H1 (cell line): ENCODE measurements at regions of chrX and their contacts with region 1.

Region 1: GRCh38 chrX:66728818-66729271 is 90.0 kb upstream of the EDA2R start:
- DNase-seq: peak; percentile 13 to 60
- H3K4me3 ChIP-seq: peak overlapping the region; percentile 72 to 84 (median 78)
- H3K27ac ChIP-seq: peak overlapping the region; percentile 77
- H3K4me1 ChIP-seq: no peaks in the 10 kb centered on the region
- H3K27me3 ChIP-seq: no peaks in the 10 kb centered on the region
- CTCF ChIP-seq: peak in 2 of 3 experiments; percentile 41 to 58; a peak in 3 of 4 replicates
- EP300 ChIP-seq: no peak
- POLR2A ChIP-seq: no peak
- RAD21 ChIP-seq: peak; percentile 65 to 69

Region 2: DNA sequence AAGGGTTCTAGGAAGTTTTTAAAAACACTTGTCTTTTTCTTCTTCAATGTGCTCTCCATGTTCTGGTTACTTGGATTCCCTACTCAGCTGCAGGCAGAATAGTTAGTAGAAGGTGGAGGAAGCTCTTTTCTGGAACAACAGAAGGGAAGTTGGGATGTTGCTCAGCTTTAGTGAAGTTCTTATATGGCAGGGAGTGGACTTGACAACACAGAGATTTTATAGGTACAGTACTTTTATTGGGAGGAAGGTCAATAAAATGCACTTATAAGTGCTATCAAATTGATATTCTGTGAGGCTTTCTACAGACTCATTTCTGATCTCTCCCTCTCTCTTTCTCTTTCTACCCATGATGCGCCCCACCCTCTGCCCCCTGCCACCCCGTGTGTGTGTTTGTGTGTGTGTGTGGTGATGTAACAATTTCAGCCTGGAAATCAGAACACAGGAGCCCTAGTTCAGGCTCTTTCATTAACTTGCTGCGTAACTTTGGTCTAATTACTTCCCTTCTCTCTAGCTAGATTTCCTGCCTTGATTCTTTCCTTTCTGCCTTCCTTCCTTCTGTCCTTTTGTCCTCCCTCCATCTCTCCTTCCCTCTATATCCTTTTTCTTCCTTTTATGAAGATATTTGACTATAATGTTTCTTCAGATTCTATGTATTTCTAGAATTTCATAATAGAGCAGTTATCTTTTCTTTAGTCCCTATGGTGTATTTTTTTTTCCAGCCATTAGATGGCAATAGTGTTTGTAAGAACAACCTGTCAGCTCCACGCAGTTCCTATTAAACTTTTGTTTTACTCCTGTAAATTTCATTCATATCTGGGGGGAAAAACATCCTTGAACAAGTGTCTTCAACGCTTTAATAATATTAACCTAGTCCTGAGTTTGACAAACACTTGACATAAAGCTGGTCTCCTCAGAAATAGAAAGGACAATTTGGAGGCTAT is 527.7 kb before region 1 on chrX:
- CTCF ChIA-PET with region 1: interaction called, 12 read pairs
- POLR2A ChIA-PET with region 1: no interaction called
- DNase-seq: no peak
- H3K4me3 ChIP-seq: no peak overlapping the region
- H3K27ac ChIP-seq: no peak overlapping the region
- H3K4me1 ChIP-seq: no peaks in the 10 kb centered on the region
- H3K27me3 ChIP-seq: no peaks in the 10 kb centered on the region
- CTCF ChIP-seq: no peak
- EP300 ChIP-seq: no peak
- POLR2A ChIP-seq: no peak
- RAD21 ChIP-seq: peak in 1 of 2 experiments; percentile 21; a peak in 2 of 4 replicates

Region 3: DNA sequence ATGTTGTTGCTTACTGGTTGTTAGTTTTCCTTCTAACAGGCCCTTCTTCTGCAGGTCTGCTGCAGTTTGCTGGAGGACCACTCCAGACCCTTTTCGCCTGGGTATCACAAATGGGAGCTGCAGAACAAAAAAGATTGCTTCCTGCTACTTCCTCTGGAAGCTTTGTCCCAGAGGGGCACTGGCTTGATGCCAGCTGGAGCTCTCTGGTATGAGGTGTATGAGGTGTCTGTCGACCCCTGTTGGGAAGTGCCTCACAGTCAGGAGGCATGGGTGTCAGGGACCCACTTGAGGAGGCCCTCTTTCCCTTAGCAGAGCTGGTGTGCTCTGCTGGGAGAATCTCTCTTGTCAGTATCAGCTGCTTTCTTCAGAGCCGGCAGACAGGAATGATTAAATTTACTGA is 37.5 kb after region 1 on chrX:
- CTCF ChIA-PET with region 1: no interaction called
- POLR2A ChIA-PET with region 1: no interaction called
- DNase-seq: no peak
- H3K4me3 ChIP-seq: no peak overlapping the region
- H3K27ac ChIP-seq: no peak overlapping the region
- H3K4me1 ChIP-seq: no peaks in the 10 kb centered on the region
- H3K27me3 ChIP-seq: no peaks in the 10 kb centered on the region
- CTCF ChIP-seq: no peak
- EP300 ChIP-seq: no peak
- POLR2A ChIP-seq: no peak
- RAD21 ChIP-seq: no peak